ENCODE measurements at regions of chr3 and their contacts with region 1.

Region 1: DNA sequence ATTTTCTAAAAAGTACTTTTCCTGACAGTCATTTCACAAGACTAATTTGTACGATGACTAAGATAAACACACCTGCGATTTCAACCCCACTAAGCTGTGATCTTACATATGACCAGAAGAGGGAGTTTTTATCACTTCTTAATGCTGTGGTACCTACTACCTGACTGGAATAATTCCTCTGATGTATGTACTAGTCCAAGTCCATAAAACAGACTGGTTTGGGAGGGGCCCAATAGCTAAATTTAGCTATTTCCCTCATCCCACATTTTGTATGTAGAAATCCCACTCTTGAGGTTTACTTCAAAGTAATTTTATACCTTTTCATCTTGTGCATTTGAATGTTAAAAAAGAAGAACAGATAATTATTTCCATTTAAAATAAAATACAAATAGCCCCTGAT is 49.7 kb upstream of the SCAANT1 start:
- DNase-seq: no peak

Region 2: DNA sequence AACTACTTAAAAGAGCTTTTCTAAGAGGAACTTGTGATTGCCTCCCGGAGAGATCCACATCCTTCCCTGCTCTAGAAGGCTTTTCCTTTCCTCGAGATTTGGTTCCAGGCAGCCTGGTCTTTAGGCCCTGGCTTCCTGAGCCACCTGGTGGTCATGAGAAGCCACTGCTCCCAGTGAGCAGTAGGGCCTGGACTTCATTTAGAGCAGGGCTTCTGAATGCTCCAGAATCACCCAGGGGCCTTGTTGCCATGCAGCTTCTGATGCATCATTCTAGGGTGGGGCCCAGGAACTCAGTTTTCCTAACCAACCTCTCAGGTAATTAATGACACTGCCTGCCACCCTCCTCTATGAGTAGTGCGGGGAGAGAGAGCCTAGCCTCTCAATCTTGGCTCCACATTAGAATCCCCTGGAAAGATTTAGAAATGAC is 31.8 kb after region 1 on chr3:
- intact Hi-C with region 1: loop called (anchors 2 kb)
- DNase-seq: no peak